HepG2 (cell line): ENCODE measurements at regions of chr3 and their contacts with region 1.

Region 1: GRCh38 chr3:15601397-15602145 is at the starts of genes BTD and HACL1:
- DNase-seq: peak; percentile 99
- ATAC-seq: peak; percentile 97
- H3K4me3 ChIP-seq: peak within 1 kb of the TSS; percentile 81 to 98 (median 90)
- H3K27ac ChIP-seq: peak within 1 kb of the TSS; percentile 94
- H3K4me1 ChIP-seq: peaks cover 40% of the 10 kb centered on the region
- H3K27me3 ChIP-seq: peaks cover 0 to 7% of the 10 kb centered on the region in 2 experiments; a peak in 1 of 5 replicates
- CTCF ChIP-seq: peak; percentile 60
- EP300 ChIP-seq: 0 out of 4 replicates have a peak, but pooled peaks of 1 of the 2 experiments have one; percentile 6
- POLR2A ChIP-seq: peak; percentile 88 to 93
- RAD21 ChIP-seq: no peak
- total RNA-seq, gene BTD: 12.4 and 15.7 TPM in 2 replicates
- total RNA-seq, gene HACL1: 25.7 and 32.0 TPM in 2 replicates

Region 2: DNA sequence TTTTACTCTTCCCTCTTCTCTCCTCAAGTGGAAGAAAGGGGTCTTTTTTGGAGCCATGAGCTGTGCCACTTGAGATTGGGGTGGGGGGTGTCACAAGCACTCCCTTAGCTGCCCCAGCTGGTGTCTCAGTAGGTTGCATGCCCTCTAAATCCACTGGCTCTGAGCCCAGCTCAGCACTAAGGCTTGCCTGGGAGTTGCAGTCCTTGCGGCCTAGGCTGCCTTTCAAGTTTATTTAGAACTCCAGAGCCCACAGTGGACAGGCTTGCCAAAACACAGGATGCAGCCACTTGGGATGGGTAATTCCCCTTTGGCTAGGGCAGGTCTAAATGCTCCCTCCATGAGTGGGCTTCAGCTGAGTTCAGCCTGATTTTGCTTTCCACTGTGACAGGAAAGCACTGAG is 901.9 kb before region 1 on chr3:
- CTCF ChIA-PET with region 1: no interaction called
- POLR2A ChIA-PET with region 1: no interaction called
- in situ Hi-C with region 1: no loop called
- intact Hi-C with region 1: loop called (anchors 5 kb)
- DNase-seq: no peak
- ATAC-seq: no peak
- H3K4me3 ChIP-seq: no peak overlapping the region
- H3K27ac ChIP-seq: no peak overlapping the region
- H3K4me1 ChIP-seq: no peaks in the 10 kb centered on the region
- H3K27me3 ChIP-seq: no peaks in the 10 kb centered on the region; a peak in 1 of 5 replicates
- CTCF ChIP-seq: no peak
- EP300 ChIP-seq: no peak
- POLR2A ChIP-seq: no peak
- RAD21 ChIP-seq: no peak

Region 3: GRCh38 chr3:15585111-15585845 is 16.3 kb before region 1 on chr3:
- CTCF ChIA-PET with region 1: no interaction called
- POLR2A ChIA-PET with region 1: interaction called, 12 read pairs
- in situ Hi-C with region 1: no loop called
- intact Hi-C with region 1: no loop called
- DNase-seq: no peak
- ATAC-seq: no peak
- H3K4me3 ChIP-seq: no peak overlapping the region
- H3K27ac ChIP-seq: no peak overlapping the region
- H3K4me1 ChIP-seq: no peaks in the 10 kb centered on the region
- H3K27me3 ChIP-seq: no peaks in the 10 kb centered on the region
- CTCF ChIP-seq: no peak
- EP300 ChIP-seq: no peak
- POLR2A ChIP-seq: no peak
- RAD21 ChIP-seq: no peak

Region 4: DNA sequence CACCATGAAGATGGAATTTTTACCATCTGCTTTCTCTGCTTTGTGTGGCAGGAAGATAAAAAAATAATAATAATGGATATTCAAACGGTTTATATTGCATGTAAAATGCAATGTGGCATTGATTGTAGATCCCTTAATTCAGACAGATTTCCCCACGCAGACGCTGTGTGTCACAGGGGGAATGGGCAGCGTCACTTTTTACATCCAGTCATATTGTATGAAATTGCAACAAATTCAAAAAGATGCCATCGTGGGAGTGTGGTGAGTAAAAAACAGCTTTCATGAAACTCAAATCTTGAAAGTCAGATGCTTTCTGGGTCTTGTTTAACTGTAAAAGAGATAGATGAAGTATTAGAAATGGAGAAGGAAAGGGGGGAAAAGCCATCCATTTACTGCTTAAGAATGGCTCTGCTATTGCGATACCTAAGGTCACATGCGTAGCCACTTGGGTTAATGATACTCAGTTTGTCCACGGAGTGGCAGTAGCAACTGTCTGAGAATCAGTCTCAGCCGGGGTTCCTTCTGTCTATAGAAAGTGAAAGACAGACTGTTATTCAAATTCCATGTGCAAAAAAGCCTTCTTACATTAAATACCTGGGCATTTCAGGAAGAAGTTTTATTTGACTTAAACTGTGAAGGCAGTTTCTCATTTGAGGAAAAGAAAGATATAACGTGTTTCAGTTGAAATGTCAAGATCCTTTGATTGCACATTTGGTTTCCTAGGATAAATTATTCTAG is 28.5 kb after region 1 on chr3:
- CTCF ChIA-PET with region 1: no interaction called
- POLR2A ChIA-PET with region 1: interaction called, 4 read pairs
- in situ Hi-C with region 1: no loop called
- intact Hi-C with region 1: loop called (anchors 2 kb)
- DNase-seq: peak; percentile 62
- ATAC-seq: peak; percentile 98
- H3K4me3 ChIP-seq: no peak overlapping the region
- H3K27ac ChIP-seq: no peak overlapping the region
- H3K4me1 ChIP-seq: peaks cover 13% of the 10 kb centered on the region
- H3K27me3 ChIP-seq: no peaks in the 10 kb centered on the region
- CTCF ChIP-seq: peak; percentile 77
- EP300 ChIP-seq: no peak
- POLR2A ChIP-seq: no peak
- RAD21 ChIP-seq: peak; percentile 55

Region 5: GRCh38 chr3:15753056-15753710 is 151.6 kb after region 1 on chr3:
- CTCF ChIA-PET with region 1: no interaction called
- POLR2A ChIA-PET with region 1: no interaction called
- in situ Hi-C with region 1: no loop called
- intact Hi-C with region 1: no loop called
- DNase-seq: peak; percentile 25
- ATAC-seq: peak; percentile 50
- H3K4me3 ChIP-seq: no peak overlapping the region
- H3K27ac ChIP-seq: no peak overlapping the region
- H3K4me1 ChIP-seq: peaks cover 11% of the 10 kb centered on the region
- H3K27me3 ChIP-seq: no peaks in the 10 kb centered on the region
- CTCF ChIP-seq: no peak
- EP300 ChIP-seq: no peak
- POLR2A ChIP-seq: no peak
- RAD21 ChIP-seq: no peak

Region 6: GRCh38 chr3:15797642-15798303 is 196.2 kb after region 1 on chr3 and contains the start of gene ANKRD28:
- CTCF ChIA-PET with region 1: no interaction called
- POLR2A ChIA-PET with region 1: no interaction called
- in situ Hi-C with region 1: no loop called
- intact Hi-C with region 1: loop called (anchors 10 kb)
- DNase-seq: peak; percentile 58
- ATAC-seq: peak; percentile 95
- H3K4me3 ChIP-seq: peak within 1 kb of the TSS; percentile 8 to 56 (median 20); a peak in 4 of 6 replicates
- H3K27ac ChIP-seq: peak within 1 kb of the TSS; percentile 64
- H3K4me1 ChIP-seq: peaks cover 27% of the 10 kb centered on the region
- H3K27me3 ChIP-seq: no peaks in the 10 kb centered on the region
- CTCF ChIP-seq: no peak
- EP300 ChIP-seq: no peak
- POLR2A ChIP-seq: no peak
- RAD21 ChIP-seq: no peak
- total RNA-seq, gene ANKRD28: 28.9 and 40.2 TPM in 2 replicates

Region 7: GRCh38 chr3:15859507-15860013 is 258.0 kb after region 1 on chr3:
- CTCF ChIA-PET with region 1: no interaction called
- POLR2A ChIA-PET with region 1: no interaction called
- in situ Hi-C with region 1: no loop called
- intact Hi-C with region 1: loop called (anchors 10 kb)
- DNase-seq: peak; percentile 65
- ATAC-seq: peak; percentile 87
- H3K4me3 ChIP-seq: peak overlapping the region; percentile 59 to 93 (median 91); a peak in 4 of 6 replicates
- H3K27ac ChIP-seq: peak overlapping the region; percentile 93
- H3K4me1 ChIP-seq: peaks cover 43% of the 10 kb centered on the region
- H3K27me3 ChIP-seq: no peaks in the 10 kb centered on the region
- CTCF ChIP-seq: no peak
- EP300 ChIP-seq: no peak
- POLR2A ChIP-seq: peak; percentile 1 to 44; a peak in 1 of 4 replicates
- RAD21 ChIP-seq: 0 out of 2 replicates have a peak, but pooled peaks have one; percentile 3

Region 8: GRCh38 chr3:16060358-16060852 is 458.8 kb after region 1 on chr3:
- CTCF ChIA-PET with region 1: no interaction called
- POLR2A ChIA-PET with region 1: no interaction called
- in situ Hi-C with region 1: no loop called
- intact Hi-C with region 1: loop called (anchors 10 kb)
- DNase-seq: peak; percentile 98
- ATAC-seq: peak; percentile 94
- H3K4me3 ChIP-seq: peak overlapping the region in 1 of 3 experiments; percentile 26; a peak in 1 of 6 replicates
- H3K27ac ChIP-seq: peak overlapping the region; percentile 69
- H3K4me1 ChIP-seq: peaks cover 58% of the 10 kb centered on the region
- H3K27me3 ChIP-seq: no peaks in the 10 kb centered on the region
- CTCF ChIP-seq: peak; percentile 84
- EP300 ChIP-seq: peak; percentile 64 to 96; a peak in 3 of 4 replicates
- POLR2A ChIP-seq: no peak
- RAD21 ChIP-seq: peak; percentile 15; the same call in 1 of the 2 replicates

Region 9: GRCh38 chr3:16329036-16329825 is 727.7 kb after region 1 on chr3:
- CTCF ChIA-PET with region 1: no interaction called
- POLR2A ChIA-PET with region 1: no interaction called
- in situ Hi-C with region 1: no loop called
- intact Hi-C with region 1: no loop called
- DNase-seq: no peak
- ATAC-seq: no peak
- H3K4me3 ChIP-seq: no peak overlapping the region
- H3K27ac ChIP-seq: no peak overlapping the region
- H3K4me1 ChIP-seq: peaks cover 70% of the 10 kb centered on the region
- H3K27me3 ChIP-seq: no peaks in the 10 kb centered on the region
- CTCF ChIP-seq: no peak
- EP300 ChIP-seq: no peak
- POLR2A ChIP-seq: no peak
- RAD21 ChIP-seq: no peak